MCF 10A (cell line): ENCODE measurements at regions of chr10 and their contacts with region 1.

Region 1: GRCh38 chr10:77873536-77874380 is 52.8 kb downstream of the DLG5 start:
- DNase-seq: peak; percentile 98
- H3K4me3 Mint-ChIP-seq: peak overlapping the region; percentile 63
- H3K27ac Mint-ChIP-seq: peak overlapping the region; percentile 85
- H3K4me1 Mint-ChIP-seq: peaks cover 71% of the 10 kb centered on the region
- H3K27me3 Mint-ChIP-seq: no peaks in the 10 kb centered on the region
- CTCF ChIP-seq: no peak

Region 2: DNA sequence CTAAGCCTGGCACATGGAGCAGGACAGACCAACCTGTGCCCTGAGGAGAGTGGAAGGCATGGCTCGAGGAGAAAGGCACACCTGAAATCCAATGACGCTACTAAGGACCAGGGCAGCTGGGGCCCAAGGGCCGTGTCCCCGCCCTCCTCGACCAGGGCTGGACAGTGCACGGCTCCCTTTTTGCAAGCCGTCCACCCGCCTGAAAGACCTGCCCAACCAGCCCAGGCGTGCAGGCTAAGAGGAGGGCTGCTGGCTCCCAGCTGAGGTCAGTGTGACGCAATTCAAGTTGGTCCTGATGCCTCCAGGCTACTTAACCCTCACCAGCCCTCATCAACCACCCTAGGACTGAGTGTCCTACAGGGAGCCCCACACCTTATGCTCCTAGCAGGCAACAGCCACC is 16.5 kb before region 1 on chr10:
- CTCF ChIA-PET with region 1: interaction called, 9 read pairs
- POLR2A ChIA-PET with region 1: interaction called, 385 read pairs
- intact Hi-C with region 1: no loop called
- DNase-seq: peak; percentile 86
- H3K4me3 Mint-ChIP-seq: peak overlapping the region; percentile 61
- H3K27ac Mint-ChIP-seq: peak overlapping the region; percentile 85
- H3K4me1 Mint-ChIP-seq: peaks cover 32% of the 10 kb centered on the region
- H3K27me3 Mint-ChIP-seq: no peaks in the 10 kb centered on the region
- CTCF ChIP-seq: no peak

Region 3: DNA sequence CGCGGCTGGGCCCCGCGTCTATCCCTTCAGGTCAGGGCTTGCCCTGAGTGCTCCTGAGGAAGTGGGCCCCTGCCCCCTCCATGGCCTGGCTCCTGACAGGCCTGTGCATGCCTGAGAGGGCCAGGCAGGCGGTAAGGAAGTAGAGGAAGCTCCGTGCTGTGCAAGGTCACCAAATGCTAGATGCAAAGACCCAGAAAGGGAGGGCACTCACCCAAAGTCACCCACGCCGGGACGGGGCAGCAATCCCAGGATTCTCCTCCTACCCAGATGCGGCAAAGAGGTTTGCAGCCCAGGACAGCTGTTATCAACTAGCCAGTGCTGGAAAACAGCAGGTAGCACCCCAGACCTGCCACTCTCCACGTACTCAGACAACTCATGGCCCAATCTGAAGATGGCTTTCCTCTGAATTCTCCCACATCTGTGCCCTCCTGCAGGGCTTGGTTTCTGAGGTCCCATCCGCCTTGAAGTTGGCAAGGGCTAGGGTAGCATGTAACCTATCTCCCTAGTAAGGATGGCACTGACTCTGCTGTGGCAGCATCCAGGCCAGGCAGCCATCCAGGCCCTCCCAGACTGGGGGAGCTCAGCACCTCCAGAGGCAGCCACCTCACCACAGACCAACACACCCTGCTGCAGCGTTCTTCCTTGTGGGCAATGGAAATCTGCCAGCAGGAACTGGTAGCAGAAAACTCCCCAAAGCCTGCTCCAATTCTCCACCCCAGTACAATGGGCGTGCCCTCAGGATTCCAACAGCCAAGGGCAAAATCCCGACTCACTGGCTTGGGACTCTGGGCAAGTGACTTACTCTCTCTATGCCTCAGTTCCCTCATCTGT is 25.1 kb after region 1 on chr10:
- CTCF ChIA-PET with region 1: interaction called, 4 read pairs
- POLR2A ChIA-PET with region 1: interaction called, 903 read pairs
- intact Hi-C with region 1: no loop called
- DNase-seq: peak; percentile 97
- H3K4me3 Mint-ChIP-seq: peak overlapping the region; percentile 75
- H3K27ac Mint-ChIP-seq: peak overlapping the region; percentile 87
- H3K4me1 Mint-ChIP-seq: peaks cover 55% of the 10 kb centered on the region
- H3K27me3 Mint-ChIP-seq: no peaks in the 10 kb centered on the region
- CTCF ChIP-seq: no peak

Region 4: DNA sequence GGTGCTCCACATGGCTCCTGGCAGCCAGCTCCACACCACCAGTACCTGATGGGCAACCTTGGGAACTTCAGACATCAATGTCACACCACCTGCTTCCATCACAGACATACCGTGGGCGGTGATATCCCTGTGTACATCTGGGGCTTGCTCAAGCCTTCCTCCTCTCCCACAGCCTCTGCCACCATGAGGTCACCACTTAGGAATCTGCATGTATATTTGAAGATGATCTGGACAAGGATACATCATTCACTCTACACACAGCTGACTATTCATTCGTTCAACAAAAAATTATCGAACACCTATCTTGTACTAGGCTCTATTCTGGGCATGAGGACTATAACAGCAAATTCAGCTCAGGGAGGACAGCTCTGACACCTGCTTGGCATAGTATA is 45.9 kb after region 1 on chr10:
- CTCF ChIA-PET with region 1: interaction called, 5 read pairs
- POLR2A ChIA-PET with region 1: interaction called, 79 read pairs
- intact Hi-C with region 1: loop called (anchors 10 kb)
- DNase-seq: peak; percentile 74
- H3K4me3 Mint-ChIP-seq: peak overlapping the region; percentile 19
- H3K27ac Mint-ChIP-seq: peak overlapping the region; percentile 46
- H3K4me1 Mint-ChIP-seq: peaks cover 52% of the 10 kb centered on the region
- H3K27me3 Mint-ChIP-seq: no peaks in the 10 kb centered on the region
- CTCF ChIP-seq: no peak

Region 5: DNA sequence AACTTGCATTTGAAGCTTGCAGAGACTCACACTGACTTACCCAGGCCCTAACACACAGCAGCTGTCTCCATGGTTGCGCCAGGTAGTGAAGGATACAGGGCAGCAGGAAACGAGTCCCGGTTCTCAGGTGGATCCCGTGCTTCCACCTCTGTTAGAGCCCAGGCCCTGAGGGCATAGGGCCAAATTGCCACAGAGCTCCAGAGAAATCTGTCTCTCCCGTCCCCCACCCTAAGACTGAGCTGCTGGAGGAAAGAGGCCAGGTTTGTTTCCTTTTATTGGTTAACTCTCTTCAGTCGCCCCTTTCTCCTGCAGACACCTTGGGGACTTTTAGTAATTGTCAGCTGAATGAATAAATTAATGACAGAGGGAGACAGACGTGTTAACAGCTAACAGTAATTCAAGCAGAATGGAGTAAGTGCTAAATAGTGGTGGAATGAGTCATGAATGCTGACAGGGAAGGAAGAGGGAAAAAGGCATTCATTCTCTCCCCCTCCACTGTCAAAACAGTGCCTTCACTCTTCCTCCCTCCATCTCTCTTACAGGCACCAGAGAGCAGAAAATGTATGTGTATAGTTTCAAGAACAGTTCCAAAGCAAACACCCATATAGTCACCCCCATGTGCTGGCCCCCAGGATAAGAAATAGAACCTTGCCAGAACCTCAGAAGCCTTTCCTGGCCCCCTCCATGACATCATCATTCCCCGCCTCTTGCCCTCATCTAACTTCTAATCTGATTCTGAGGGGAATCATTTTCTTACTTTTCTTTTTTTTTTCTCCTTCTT is 69.6 kb after region 1 on chr10:
- CTCF ChIA-PET with region 1: no interaction called
- POLR2A ChIA-PET with region 1: interaction called, 12 read pairs
- intact Hi-C with region 1: no loop called
- DNase-seq: peak; percentile 90
- H3K4me3 Mint-ChIP-seq: peak overlapping the region; percentile 50
- H3K27ac Mint-ChIP-seq: peak overlapping the region; percentile 95
- H3K4me1 Mint-ChIP-seq: peaks cover 43% of the 10 kb centered on the region
- H3K27me3 Mint-ChIP-seq: no peaks in the 10 kb centered on the region
- CTCF ChIP-seq: no peak

Region 6: DNA sequence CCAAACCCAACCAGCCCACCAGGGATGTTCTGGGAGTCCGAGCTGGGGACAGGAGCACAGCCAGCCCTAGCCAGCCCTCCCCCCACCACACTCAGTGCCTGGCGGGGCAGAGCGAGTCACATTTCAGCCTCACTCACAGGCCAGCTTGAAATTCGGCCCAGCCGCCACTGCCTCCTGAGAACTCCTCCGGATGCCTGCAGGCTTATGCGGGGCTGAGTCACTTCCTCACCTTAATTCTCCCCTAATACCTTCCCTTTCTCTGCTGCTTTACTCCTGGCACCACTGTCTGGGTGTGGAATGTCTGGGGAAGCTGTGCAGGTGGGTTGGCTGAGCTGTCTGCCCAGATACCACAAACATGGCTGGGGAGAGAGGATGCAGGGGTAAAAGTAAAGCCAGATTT is 75.4 kb after region 1 on chr10:
- CTCF ChIA-PET with region 1: no interaction called
- POLR2A ChIA-PET with region 1: interaction called, 12 read pairs
- intact Hi-C with region 1: no loop called
- DNase-seq: peak; percentile 96
- H3K4me3 Mint-ChIP-seq: no peak overlapping the region
- H3K27ac Mint-ChIP-seq: peak overlapping the region; percentile 11
- H3K4me1 Mint-ChIP-seq: peaks cover 34% of the 10 kb centered on the region
- H3K27me3 Mint-ChIP-seq: no peaks in the 10 kb centered on the region
- CTCF ChIP-seq: no peak